WTC11 (cell line): ENCODE measurements at regions of chr15 and their contacts with region 1.

Region 1: GRCh38 chr15:77784395-77785292 is 151.9 kb upstream of the LINGO1 start:
- DNase-seq: peak; percentile 79
- ATAC-seq: peak; percentile 79
- H3K4me3 Mint-ChIP-seq: no peak overlapping the region
- H3K27ac Mint-ChIP-seq: no peak overlapping the region
- H3K4me1 Mint-ChIP-seq: peaks cover 20% of the 10 kb centered on the region
- H3K27me3 Mint-ChIP-seq: no peaks in the 10 kb centered on the region
- CTCF ChIP-seq: peak; percentile 58

Region 2: GRCh38 chr15:77464129-77464865 is 320.3 kb before region 1 on chr15:
- CTCF ChIA-PET with region 1: no interaction called
- POLR2A ChIA-PET with region 1: no interaction called
- DNase-seq: no peak
- ATAC-seq: no peak
- H3K4me3 Mint-ChIP-seq: no peak overlapping the region
- H3K27ac Mint-ChIP-seq: no peak overlapping the region
- H3K4me1 Mint-ChIP-seq: peaks cover 23% of the 10 kb centered on the region
- H3K27me3 Mint-ChIP-seq: no peaks in the 10 kb centered on the region
- CTCF ChIP-seq: no peak

Region 3: DNA sequence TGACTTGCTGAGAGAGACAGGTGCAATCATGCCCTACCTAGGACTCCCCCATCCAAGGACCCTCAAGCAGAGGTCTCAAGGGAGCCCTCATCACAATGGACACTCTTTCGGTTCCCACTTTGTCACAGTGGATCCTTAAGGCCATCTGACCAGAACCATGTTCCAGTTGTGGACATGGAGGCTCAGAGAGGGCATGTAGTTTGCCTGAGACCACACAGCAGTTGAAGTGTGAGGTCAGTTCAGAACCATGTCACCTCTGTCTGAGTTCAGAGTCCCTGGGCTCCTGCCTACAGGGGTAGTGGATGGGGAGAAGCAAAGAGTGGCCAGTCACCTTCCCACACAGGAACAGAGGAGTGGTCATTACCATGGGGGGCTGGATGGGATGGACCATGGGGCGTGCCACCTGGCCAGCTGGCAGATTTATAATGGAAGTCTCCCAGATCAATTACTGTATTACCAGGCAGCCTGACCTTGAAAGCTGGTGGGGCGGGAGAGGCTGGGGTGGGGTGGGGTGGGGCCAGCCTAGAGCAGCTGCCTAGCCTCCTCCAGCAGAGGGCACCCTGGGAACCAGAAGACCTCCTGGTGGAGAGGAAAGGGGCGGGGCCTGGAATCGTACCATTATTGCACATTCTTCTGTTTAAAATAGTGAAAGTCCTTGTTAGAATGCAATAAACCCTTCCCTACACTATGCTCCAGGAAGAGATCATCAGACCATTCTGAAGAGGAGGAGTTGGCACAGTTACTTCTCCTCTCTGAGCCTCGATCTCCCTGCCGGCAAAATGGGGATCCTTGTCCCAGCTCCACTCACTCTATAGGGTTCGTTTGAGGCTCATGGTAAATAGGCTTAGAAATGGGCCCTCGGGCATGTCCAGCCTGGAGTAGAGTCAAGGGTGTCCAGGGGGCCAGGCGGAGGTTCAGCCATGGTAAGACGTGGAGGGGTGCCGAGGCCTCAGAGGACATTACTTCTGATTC is 125.0 kb before region 1 on chr15:
- CTCF ChIA-PET with region 1: interaction called, 37 read pairs
- POLR2A ChIA-PET with region 1: no interaction called
- DNase-seq: peak; percentile 77
- ATAC-seq: peak; percentile 46
- H3K4me3 Mint-ChIP-seq: no peak overlapping the region
- H3K27ac Mint-ChIP-seq: no peak overlapping the region
- H3K4me1 Mint-ChIP-seq: peaks cover 29% of the 10 kb centered on the region
- H3K27me3 Mint-ChIP-seq: no peaks in the 10 kb centered on the region; the same call in 1 of the 2 replicates
- CTCF ChIP-seq: no peak

Region 4: GRCh38 chr15:77702211-77702957 is 82.3 kb before region 1 on chr15:
- CTCF ChIA-PET with region 1: interaction called, 12 read pairs
- POLR2A ChIA-PET with region 1: no interaction called
- DNase-seq: peak; percentile 80
- ATAC-seq: peak; percentile 97
- H3K4me3 Mint-ChIP-seq: no peak overlapping the region
- H3K27ac Mint-ChIP-seq: no peak overlapping the region
- H3K4me1 Mint-ChIP-seq: peaks cover 5% of the 10 kb centered on the region
- H3K27me3 Mint-ChIP-seq: no peaks in the 10 kb centered on the region; the same call in 1 of the 2 replicates
- CTCF ChIP-seq: no peak

Region 5: GRCh38 chr15:77732514-77733335 is 51.9 kb before region 1 on chr15:
- CTCF ChIA-PET with region 1: interaction called, 11 read pairs
- POLR2A ChIA-PET with region 1: no interaction called
- DNase-seq: no peak
- ATAC-seq: no peak
- H3K4me3 Mint-ChIP-seq: no peak overlapping the region
- H3K27ac Mint-ChIP-seq: no peak overlapping the region
- H3K4me1 Mint-ChIP-seq: peaks cover 19% of the 10 kb centered on the region
- H3K27me3 Mint-ChIP-seq: no peaks in the 10 kb centered on the region; the same call in 1 of the 2 replicates
- CTCF ChIP-seq: no peak

Region 6: GRCh38 chr15:77747175-77748077 is 37.2 kb before region 1 on chr15:
- CTCF ChIA-PET with region 1: interaction called, 16 read pairs
- POLR2A ChIA-PET with region 1: no interaction called
- DNase-seq: no peak
- ATAC-seq: no peak
- H3K4me3 Mint-ChIP-seq: no peak overlapping the region
- H3K27ac Mint-ChIP-seq: no peak overlapping the region
- H3K4me1 Mint-ChIP-seq: peaks cover 21% of the 10 kb centered on the region
- H3K27me3 Mint-ChIP-seq: peaks cover 47% of the 10 kb centered on the region
- CTCF ChIP-seq: no peak

Region 7: DNA sequence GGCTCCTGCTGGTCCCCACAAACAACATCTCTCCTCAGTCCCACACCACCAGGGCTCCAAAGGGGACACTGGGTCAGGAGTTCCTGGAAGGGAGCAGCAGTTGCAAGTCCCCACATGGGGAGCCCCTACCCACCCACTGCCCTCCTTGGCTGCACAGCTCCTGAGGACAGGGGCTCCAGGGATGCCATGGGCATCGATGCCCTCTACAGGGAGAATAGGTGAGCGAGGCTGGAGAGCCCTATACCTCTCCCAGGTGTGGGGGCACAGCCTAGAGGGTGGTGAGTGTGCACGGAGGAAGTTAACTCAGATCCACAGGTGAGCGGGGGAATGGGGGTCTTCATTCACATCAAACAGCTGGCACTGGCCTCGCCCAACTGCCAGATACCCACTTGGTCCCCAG is 10.7 kb before region 1 on chr15:
- CTCF ChIA-PET with region 1: interaction called, 25 read pairs
- POLR2A ChIA-PET with region 1: no interaction called
- DNase-seq: no peak
- ATAC-seq: no peak
- H3K4me3 Mint-ChIP-seq: no peak overlapping the region
- H3K27ac Mint-ChIP-seq: peak overlapping the region; percentile 49; the same call in 1 of the 2 replicates
- H3K4me1 Mint-ChIP-seq: 0 out of 2 replicates have a peak, but pooled peaks cover 4% of the 10 kb centered on the region
- H3K27me3 Mint-ChIP-seq: no peaks in the 10 kb centered on the region
- CTCF ChIP-seq: no peak

Region 8: DNA sequence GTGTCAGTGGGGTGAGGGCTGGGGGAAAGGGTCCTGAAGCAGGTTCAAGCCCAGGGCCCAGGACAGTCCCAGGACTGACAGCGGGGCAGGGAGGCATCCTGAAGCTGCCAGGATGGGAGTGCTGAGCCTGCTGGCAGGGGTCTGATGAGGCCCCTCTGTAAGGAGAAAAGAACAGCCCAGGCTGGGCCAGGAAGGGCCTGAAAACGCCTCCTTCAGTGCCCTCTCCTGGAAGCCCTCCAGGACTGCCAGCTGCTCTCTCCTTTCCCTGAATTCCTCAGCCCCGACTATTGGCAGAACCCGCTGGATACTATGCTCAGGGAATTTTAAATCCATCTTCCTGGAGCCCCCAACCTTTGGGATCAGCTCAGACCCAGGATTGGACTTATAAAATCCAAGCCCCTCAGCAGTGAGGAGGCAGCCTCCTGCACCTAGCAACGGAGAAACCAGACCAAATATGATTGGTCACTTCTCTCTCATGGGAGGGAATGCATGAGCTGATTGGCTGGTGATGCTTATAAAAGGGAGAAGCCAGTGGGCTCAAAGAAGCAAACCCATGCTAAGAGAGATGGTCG is 51.6 kb after region 1 on chr15:
- CTCF ChIA-PET with region 1: interaction called, 13 read pairs
- POLR2A ChIA-PET with region 1: no interaction called
- DNase-seq: no peak
- ATAC-seq: peak; percentile 84
- H3K4me3 Mint-ChIP-seq: no peak overlapping the region
- H3K27ac Mint-ChIP-seq: no peak overlapping the region
- H3K4me1 Mint-ChIP-seq: peaks cover 16% of the 10 kb centered on the region
- H3K27me3 Mint-ChIP-seq: no peaks in the 10 kb centered on the region; the same call in 1 of the 2 replicates
- CTCF ChIP-seq: no peak

Region 9: DNA sequence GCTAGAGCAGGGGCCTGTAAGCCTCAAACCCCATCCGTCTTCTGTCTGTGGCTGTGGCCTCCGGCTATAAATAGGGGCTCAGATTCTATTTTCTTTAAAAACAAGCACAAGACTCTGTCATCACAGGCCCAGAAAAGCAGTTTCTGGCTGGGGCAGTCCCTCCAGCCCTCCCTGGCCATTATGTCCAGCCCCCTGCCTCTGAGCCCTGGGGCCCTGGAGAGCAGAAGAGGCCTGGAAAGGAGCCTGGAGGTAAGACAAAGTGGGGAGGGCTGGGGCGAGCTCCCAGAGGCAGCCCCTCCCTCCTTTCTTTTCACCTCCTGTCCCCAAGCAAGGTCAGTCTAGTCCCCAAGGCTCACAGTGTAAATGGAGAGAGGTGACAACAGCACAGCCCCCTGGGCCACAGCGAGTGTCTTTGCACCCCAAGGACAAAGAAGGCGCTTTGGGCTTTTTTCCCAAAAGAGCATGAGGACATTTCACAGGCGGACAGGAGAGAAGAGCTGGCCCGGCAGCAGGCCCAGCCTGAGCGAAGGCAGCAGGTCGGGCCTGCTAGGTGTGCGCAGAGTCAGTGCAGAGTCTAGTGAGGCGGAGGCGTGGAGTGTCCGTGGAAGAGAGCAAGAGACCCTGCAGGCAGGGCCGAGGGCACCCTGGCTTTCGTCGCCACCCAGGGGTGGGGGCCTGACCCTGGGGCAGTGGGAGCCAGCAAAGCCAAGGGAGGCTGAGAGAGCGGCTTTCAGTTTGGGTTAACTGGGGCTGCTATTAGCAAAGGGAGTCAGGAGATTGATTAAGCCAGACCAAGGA is 104.6 kb after region 1 on chr15:
- CTCF ChIA-PET with region 1: no interaction called
- POLR2A ChIA-PET with region 1: no interaction called
- DNase-seq: no peak
- ATAC-seq: no peak
- H3K4me3 Mint-ChIP-seq: no peak overlapping the region
- H3K27ac Mint-ChIP-seq: no peak overlapping the region
- H3K4me1 Mint-ChIP-seq: no peaks in the 10 kb centered on the region
- H3K27me3 Mint-ChIP-seq: no peaks in the 10 kb centered on the region
- CTCF ChIP-seq: no peak

Region 10: DNA sequence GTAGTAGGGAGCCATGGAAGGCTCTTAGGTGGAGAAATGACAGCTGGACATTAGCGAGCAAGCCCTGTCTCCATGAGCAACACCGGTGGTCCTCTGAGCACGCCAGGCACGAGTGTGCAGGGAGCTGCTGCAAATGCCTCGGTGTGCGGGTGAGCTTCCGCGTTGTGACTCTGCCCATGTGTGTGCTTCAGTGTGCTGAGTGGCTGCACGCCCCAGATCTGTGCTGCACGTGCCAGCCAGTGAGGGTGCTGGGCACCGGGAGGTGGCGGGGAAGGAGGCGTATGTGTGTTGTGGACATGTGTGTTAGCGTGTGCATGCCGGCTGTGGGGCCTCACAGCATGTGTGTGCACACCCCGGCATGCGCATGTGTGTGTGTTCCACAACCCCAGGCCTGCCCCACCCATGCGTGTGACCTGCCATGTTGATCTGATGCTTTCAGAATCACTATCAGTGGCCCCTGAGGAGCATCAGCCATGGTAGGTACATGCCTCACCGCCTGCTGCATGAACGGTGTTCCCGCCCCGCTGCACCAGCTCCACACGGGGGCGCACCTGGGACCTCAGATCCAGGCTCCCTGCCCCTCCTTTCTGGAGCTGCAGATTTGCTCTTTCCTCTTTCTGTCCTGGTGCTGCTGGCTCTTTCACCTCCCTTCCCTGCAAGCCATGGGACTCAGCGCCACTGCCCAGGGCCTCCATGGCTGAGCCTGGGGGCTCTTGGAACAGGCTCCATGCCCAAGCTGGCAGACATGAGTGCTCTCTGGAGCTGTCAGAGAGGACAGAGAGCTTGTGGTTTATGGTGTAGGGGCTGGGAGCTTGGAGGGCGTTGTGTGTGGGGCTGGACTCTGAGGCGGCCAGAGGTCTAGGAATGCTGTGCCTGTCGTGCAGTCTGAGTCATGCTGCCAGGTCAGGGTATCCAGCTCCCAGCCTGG is 123.4 kb after region 1 on chr15:
- CTCF ChIA-PET with region 1: no interaction called
- POLR2A ChIA-PET with region 1: no interaction called
- DNase-seq: peak; percentile 85
- ATAC-seq: peak; percentile 88
- H3K4me3 Mint-ChIP-seq: no peak overlapping the region
- H3K27ac Mint-ChIP-seq: no peak overlapping the region
- H3K4me1 Mint-ChIP-seq: peaks cover 17% of the 10 kb centered on the region
- H3K27me3 Mint-ChIP-seq: peaks cover 3% of the 10 kb centered on the region; the same call in 1 of the 2 replicates
- CTCF ChIP-seq: 0 out of 2 replicates have a peak, but pooled peaks have one; percentile 36